Transverse colon (tissue), 4 donors: ENCODE measurements at regions of chr1 and their contacts with region 1.

Region 1: GRCh38 chr1:19240673-19241538 is 10.4 kb downstream of the EMC1 start:
- DNase-seq: peak; percentile 57
- H3K4me3 ChIP-seq: no peak overlapping the region
- H3K27ac ChIP-seq: peak overlapping the region; percentile 18 to 49 (median 38)
- H3K4me1 ChIP-seq: peaks cover 0 to 5% (median 0%) of the 10 kb centered on the region in 4 donors
- H3K27me3 ChIP-seq: no peaks in the 10 kb centered on the region
- CTCF ChIP-seq: peak; percentile 90 to 98 (median 96)
- EP300 ChIP-seq: no peak
- POLR2A ChIP-seq: no peak

Region 2: DNA sequence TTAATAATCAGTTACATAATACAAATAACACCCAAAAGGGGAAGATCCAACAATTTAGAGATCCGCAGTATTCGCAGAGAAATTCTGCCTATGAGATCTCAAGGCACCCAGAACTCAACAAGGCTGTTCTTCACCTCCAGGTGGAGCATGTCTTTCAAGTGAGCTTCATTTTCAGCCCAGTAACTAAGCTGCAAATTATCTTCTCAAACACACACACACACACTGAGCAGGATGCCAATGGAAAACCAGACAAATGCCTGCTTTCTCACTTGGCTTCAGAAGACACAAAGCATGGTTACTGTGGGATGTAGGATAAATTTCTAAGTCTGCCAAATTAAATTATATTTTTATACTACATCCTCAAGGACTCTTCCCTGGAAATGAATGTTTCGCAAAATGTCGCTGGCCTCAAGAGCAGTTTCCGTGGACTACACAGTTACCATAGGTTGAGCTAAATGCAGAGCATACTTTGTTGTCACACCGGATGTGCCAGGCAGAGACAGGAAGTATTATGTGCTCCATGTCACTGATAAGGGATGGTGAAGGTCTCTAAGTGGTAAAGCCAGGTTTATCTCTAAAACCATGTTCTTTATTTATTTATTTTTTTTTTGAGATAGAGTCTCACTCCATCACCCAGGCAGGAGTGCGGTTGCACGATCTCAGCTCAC is 61.2 kb before region 1 on chr1:
- in situ Hi-C with region 1: no loop called
- intact Hi-C with region 1: loop called (anchors 10 kb)
- DNase-seq: no peak
- H3K4me3 ChIP-seq: no peak overlapping the region
- H3K27ac ChIP-seq: no peak overlapping the region
- H3K4me1 ChIP-seq: no peaks in the 10 kb centered on the region
- H3K27me3 ChIP-seq: no peaks in the 10 kb centered on the region
- CTCF ChIP-seq: peak in 3 of 5 experiments; percentile 19 to 37 (median 23)
- EP300 ChIP-seq: no peak
- POLR2A ChIP-seq: no peak

Region 3: DNA sequence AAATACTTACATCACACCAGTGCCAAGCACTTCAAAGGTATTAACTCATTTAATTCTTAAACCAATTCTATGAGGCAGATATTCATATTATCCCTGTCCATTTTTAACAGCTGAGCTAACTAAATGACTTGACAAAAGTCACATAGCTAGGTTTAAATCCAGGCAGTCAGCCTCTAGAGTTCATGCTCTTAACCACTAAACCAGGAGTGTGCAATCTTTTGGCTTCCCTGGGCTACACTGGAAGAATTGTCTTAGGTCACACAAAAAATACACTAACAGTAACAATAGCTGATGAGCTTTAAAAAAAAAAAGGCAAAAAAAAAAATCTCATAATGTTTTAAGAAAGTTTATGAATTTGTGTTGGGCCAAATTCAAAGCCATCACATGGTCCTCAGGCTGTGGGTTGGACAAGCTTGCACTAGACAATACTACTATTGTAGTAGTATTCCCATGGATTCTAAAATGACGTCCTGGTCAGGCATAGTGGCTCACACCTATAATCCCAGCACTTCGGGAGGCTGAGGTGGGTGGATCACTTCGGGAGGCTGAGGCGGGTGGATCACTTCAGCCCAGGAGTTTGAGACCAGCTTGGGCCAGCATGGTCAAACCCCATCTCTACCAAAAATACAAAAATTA is 40.8 kb before region 1 on chr1:
- in situ Hi-C with region 1: loop called in 1 of 4 experiments (anchors 10 kb)
- intact Hi-C with region 1: no loop called
- DNase-seq: no peak
- H3K4me3 ChIP-seq: no peak overlapping the region
- H3K27ac ChIP-seq: no peak overlapping the region
- H3K4me1 ChIP-seq: peaks cover 9 to 31% (median 20%) of the 10 kb centered on the region in 4 donors
- H3K27me3 ChIP-seq: no peaks in the 10 kb centered on the region
- CTCF ChIP-seq: no peak
- EP300 ChIP-seq: no peak
- POLR2A ChIP-seq: no peak

Region 4: DNA sequence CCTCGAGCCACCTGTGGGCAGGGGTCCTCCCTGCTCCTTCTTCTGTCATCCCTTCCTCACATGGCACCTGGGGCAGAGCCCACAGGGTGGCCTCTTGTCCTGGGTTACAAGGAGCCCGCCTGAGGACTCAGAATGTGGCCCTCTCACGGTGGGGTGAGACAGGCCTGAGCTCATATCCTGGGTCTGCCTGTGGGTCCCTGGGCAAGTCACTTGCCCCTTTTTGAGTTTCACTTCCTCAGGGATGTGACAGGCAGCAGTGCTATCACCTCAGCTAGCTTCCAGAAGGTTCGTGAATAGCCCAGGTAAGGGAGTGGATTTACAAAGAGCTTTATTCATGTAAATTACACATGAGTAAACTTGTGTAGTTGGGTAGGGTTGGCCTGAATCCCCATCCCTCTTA is 457.3 kb after region 1 on chr1:
- in situ Hi-C with region 1: no loop called
- intact Hi-C with region 1: no loop called
- DNase-seq: no peak
- H3K4me3 ChIP-seq: no peak overlapping the region
- H3K27ac ChIP-seq: no peak overlapping the region
- H3K4me1 ChIP-seq: no peaks in the 10 kb centered on the region
- H3K27me3 ChIP-seq: no peaks in the 10 kb centered on the region
- CTCF ChIP-seq: no peak
- EP300 ChIP-seq: no peak
- POLR2A ChIP-seq: no peak